ENCODE measurements at regions of chr2 and their contacts with region 1.

Region 1: GRCh38 chr2:11743846-11744553 is 2.4 kb upstream of the LPIN1 start:
- DNase-seq: peak; percentile 85 to 92 (median 92)
- H3K4me3 ChIP-seq: peak overlapping the region in 1 of 7 experiments; percentile 4
- H3K27ac ChIP-seq: peak overlapping the region in 1 of 2 experiments; percentile 67
- H3K4me1 ChIP-seq: peaks cover 7 to 67% (median 51%) of the 10 kb centered on the region in 4 experiments
- H3K27me3 ChIP-seq: no peaks in the 10 kb centered on the region

Region 2: GRCh38 chr2:11583840-11584524 is 160.0 kb before region 1 on chr2:
- CTCF ChIA-PET with region 1: no interaction called
- POLR2A ChIA-PET with region 1: no interaction called
- DNase-seq: peak; percentile 87 to 95 (median 94)
- H3K4me3 ChIP-seq: no peak overlapping the region
- H3K27ac ChIP-seq: no peak overlapping the region
- H3K4me1 ChIP-seq: no peaks in the 10 kb centered on the region
- H3K27me3 ChIP-seq: peaks cover 0 to 9% (median 3%) of the 10 kb centered on the region in 5 experiments

Region 3: DNA sequence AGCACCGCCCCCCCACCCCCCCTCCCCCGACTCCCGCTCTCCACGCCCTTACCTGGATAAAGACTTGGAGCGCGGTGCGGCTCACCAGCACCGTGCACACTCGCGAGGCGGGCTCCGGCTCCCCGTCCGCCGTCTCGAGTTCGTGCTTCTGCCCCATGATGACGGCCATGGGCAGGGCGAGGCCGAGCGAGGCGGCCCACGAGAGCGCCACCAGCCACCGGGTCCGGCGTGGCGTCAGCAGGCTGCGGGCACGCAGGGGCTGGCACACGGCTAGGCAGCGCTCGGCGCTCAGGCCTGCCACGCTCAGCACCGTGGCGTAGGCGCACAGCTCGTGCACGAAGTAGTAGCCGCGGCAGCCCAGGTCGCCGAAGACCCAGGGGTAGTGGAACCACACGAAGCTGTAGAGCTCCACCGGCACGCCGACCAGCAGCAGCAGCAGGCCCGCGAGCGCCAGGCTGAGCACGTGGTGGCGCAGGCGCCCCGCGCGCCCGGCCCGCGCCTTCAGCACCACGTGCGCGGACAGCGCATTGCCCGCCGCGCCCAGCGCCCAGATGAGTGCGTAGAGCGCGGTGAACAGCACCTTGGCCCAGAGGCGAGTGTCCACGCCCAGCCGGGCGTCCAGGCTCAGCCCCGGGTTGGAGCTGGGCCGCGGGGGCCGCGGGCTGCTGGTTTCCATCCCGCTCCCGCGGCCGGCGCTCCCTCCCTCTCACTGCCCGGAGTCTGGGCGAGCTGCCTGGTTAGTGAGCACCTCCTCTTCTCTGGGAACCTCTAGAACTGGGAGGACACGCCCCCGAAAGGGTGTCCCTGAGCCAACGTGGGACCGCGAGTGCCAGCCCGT is 74.3 kb before region 1 on chr2 and contains the start of gene NTSR2:
- CTCF ChIA-PET with region 1: no interaction called
- POLR2A ChIA-PET with region 1: no interaction called
- DNase-seq: peak; percentile 57 to 81 (median 77)
- H3K4me3 ChIP-seq: no peak within 1 kb of the TSS
- H3K27ac ChIP-seq: no peak within 1 kb of the TSS
- H3K4me1 ChIP-seq: peaks cover 0 to 6% (median 5%) of the 10 kb centered on the region in 4 experiments
- H3K27me3 ChIP-seq: peaks cover 0 to 42% (median 20%) of the 10 kb centered on the region in 5 experiments

Region 4: GRCh38 chr2:11688222-11689069 is 55.6 kb before region 1 on chr2:
- CTCF ChIA-PET with region 1: interaction called, 460 read pairs
- POLR2A ChIA-PET with region 1: no interaction called
- DNase-seq: peak; percentile 91 to 94 (median 94)
- H3K4me3 ChIP-seq: peak overlapping the region in 4 of 7 experiments; percentile 34 to 67 (median 48)
- H3K27ac ChIP-seq: no peak overlapping the region
- H3K4me1 ChIP-seq: peaks cover 4 to 23% (median 11%) of the 10 kb centered on the region in 4 experiments
- H3K27me3 ChIP-seq: peaks cover 0 to 11% (median 6%) of the 10 kb centered on the region in 5 experiments

Region 5: DNA sequence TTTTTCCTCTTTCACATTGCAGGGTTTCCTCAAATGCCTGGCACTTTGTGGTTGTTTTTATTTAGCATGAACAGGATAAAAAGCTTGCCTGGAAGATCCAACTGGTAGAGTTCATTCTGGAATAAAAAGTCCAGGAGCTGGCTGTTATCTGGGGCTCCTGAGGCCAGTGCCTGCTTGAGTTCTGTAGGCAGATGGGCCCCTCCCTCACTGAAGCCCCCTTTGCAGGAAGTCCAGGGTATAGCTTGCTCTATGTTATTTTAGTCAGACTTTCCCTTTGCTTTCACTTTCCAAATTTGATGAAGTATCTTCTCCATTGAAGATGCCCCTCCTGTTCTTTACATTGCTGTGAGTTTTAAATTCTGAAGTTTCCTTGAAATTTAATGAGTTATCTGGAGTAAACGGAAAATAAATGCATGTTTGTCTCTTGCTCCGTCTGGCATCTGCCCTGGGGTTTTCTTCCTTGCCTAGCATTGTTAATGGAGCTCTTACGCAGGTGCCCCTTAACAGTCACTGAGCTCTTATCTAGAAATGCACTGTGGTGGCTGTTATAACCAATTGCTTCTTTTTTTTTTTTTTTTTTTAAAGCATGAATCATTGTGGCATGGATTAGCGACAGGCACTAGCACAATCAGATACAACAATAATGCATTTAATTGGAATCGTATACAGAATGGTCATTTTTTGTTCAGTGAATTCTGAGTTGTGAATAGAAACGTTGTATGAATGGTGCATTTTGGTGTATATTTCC is 24.6 kb before region 1 on chr2:
- CTCF ChIA-PET with region 1: interaction called, 36 read pairs
- POLR2A ChIA-PET with region 1: interaction called, 5 read pairs
- DNase-seq: peak; percentile 61 to 87 (median 77)
- H3K4me3 ChIP-seq: peak overlapping the region in 6 of 7 experiments; percentile 46 to 76 (median 60)
- H3K27ac ChIP-seq: peak overlapping the region; percentile 8 to 49
- H3K4me1 ChIP-seq: peaks cover 3 to 31% (median 20%) of the 10 kb centered on the region in 4 experiments
- H3K27me3 ChIP-seq: no peaks in the 10 kb centered on the region

Region 6: GRCh38 chr2:11753886-11754699 is 10.1 kb after region 1 on chr2:
- CTCF ChIA-PET with region 1: interaction called, 80 read pairs
- POLR2A ChIA-PET with region 1: interaction called, 6 read pairs
- DNase-seq: peak; percentile 71 to 94 (median 91)
- H3K4me3 ChIP-seq: peak overlapping the region; percentile 3 to 69 (median 56)
- H3K27ac ChIP-seq: peak overlapping the region; percentile 91 to 93
- H3K4me1 ChIP-seq: peaks cover 37 to 93% (median 85%) of the 10 kb centered on the region in 4 experiments
- H3K27me3 ChIP-seq: no peaks in the 10 kb centered on the region

Region 7: GRCh38 chr2:11764359-11764758 is 20.4 kb after region 1 on chr2:
- CTCF ChIA-PET with region 1: interaction called, 207 read pairs
- POLR2A ChIA-PET with region 1: interaction called, 3 read pairs
- DNase-seq: no peak
- H3K4me3 ChIP-seq: no peak overlapping the region
- H3K27ac ChIP-seq: no peak overlapping the region
- H3K4me1 ChIP-seq: peaks cover 8 to 65% (median 38%) of the 10 kb centered on the region in 4 experiments
- H3K27me3 ChIP-seq: no peaks in the 10 kb centered on the region

Region 8: GRCh38 chr2:11778923-11779757 is 35.1 kb after region 1 on chr2:
- CTCF ChIA-PET with region 1: interaction called, 430 read pairs
- POLR2A ChIA-PET with region 1: interaction called, 5 read pairs
- DNase-seq: peak; percentile 75 to 85 (median 81)
- H3K4me3 ChIP-seq: peak overlapping the region in 3 of 7 experiments; percentile 50 to 69 (median 52)
- H3K27ac ChIP-seq: no peak overlapping the region
- H3K4me1 ChIP-seq: peaks cover 8 to 41% (median 25%) of the 10 kb centered on the region in 4 experiments
- H3K27me3 ChIP-seq: no peaks in the 10 kb centered on the region

Region 9: GRCh38 chr2:13040043-13040442 is 1296.0 kb after region 1 on chr2:
- CTCF ChIA-PET with region 1: no interaction called
- POLR2A ChIA-PET with region 1: no interaction called
- DNase-seq: no peak
- H3K4me3 ChIP-seq: no peak overlapping the region
- H3K27ac ChIP-seq: no peak overlapping the region
- H3K4me1 ChIP-seq: no peaks in the 10 kb centered on the region
- H3K27me3 ChIP-seq: peaks cover 0 to 2% (median 0%) of the 10 kb centered on the region in 5 experiments